ENCODE measurements at regions of chr6 and their contacts with region 1.

Region 1: GRCh38 chr6:41591859-41592502 is 45.8 kb downstream of the FOXP4 start:
- DNase-seq: no peak
- H3K4me3 ChIP-seq: no peak overlapping the region
- H3K27ac ChIP-seq: no peak overlapping the region
- H3K4me1 ChIP-seq: peaks cover 11% of the 10 kb centered on the region
- H3K27me3 ChIP-seq: no peaks in the 10 kb centered on the region
- CTCF ChIP-seq: peak; percentile 87 to 89 (median 88)
- POLR2A ChIP-seq: no peak

Region 2: DNA sequence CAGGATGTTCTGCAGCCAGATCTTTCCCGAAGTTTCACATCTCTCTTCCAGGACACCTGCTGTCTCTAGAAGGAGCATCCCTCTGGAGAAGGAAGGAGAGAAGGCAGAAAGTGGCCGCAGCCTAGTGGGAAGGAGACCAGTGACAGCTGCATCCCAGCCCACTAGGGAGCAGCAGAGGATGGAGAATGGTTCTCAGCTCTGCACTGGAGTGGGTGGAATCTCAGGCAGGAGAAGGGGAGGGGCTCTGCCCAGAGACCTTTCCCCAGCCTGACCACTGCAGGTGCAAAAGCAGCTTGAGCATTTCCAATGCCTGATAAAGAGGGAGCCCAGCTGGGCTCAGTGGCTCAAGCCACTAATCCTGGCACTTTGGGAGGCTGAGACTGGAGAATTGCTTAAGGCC is 224.3 kb before region 1 on chr6:
- intact Hi-C with region 1: loop called (anchors 5 kb)
- DNase-seq: peak in 1 of 2 donors; percentile 62
- H3K4me3 ChIP-seq: no peak overlapping the region
- H3K27ac ChIP-seq: no peak overlapping the region
- H3K4me1 ChIP-seq: peaks cover 24% of the 10 kb centered on the region
- H3K27me3 ChIP-seq: no peaks in the 10 kb centered on the region
- CTCF ChIP-seq: peak in 1 of 3 experiments; percentile 49
- POLR2A ChIP-seq: no peak

Region 3: GRCh38 chr6:41424370-41425058 is 167.5 kb before region 1 on chr6:
- intact Hi-C with region 1: loop called (anchors 5 kb)
- DNase-seq: no peak
- H3K4me3 ChIP-seq: no peak overlapping the region
- H3K27ac ChIP-seq: no peak overlapping the region
- H3K4me1 ChIP-seq: peaks cover 26% of the 10 kb centered on the region
- H3K27me3 ChIP-seq: no peaks in the 10 kb centered on the region
- CTCF ChIP-seq: peak; percentile 54 to 79 (median 77)
- POLR2A ChIP-seq: no peak

Region 4: GRCh38 chr6:41463062-41463930 is 128.7 kb before region 1 on chr6:
- intact Hi-C with region 1: loop called (anchors 5 kb)
- DNase-seq: no peak
- H3K4me3 ChIP-seq: no peak overlapping the region
- H3K27ac ChIP-seq: no peak overlapping the region
- H3K4me1 ChIP-seq: no peaks in the 10 kb centered on the region
- H3K27me3 ChIP-seq: no peaks in the 10 kb centered on the region
- CTCF ChIP-seq: peak; percentile 21 to 49 (median 49)
- POLR2A ChIP-seq: no peak